CD8-positive, alpha-beta T cell (primary cell): ENCODE measurements at regions of chr6 and their contacts with region 1.

Region 1: GRCh38 chr6:80338201-80338836 is 231.8 kb downstream of the BCKDHB start:
- DNase-seq: peak; percentile 44 to 76 (median 67)
- ATAC-seq: peak; percentile 71
- H3K4me3 ChIP-seq: no peak overlapping the region
- H3K4me3 Mint-ChIP-seq: peak overlapping the region; percentile 16
- H3K27ac ChIP-seq: no peak overlapping the region
- H3K27ac Mint-ChIP-seq: no peak overlapping the region
- H3K4me1 ChIP-seq: no peaks in the 10 kb centered on the region
- H3K4me1 Mint-ChIP-seq: peaks cover 6% of the 10 kb centered on the region
- H3K27me3 ChIP-seq: no peaks in the 10 kb centered on the region
- H3K27me3 Mint-ChIP-seq: no peaks in the 10 kb centered on the region
- CTCF ChIP-seq: peak; percentile 84

Region 2: GRCh38 chr6:80380566-80380965 is 42.2 kb after region 1 on chr6:
- CTCF ChIA-PET with region 1: no interaction called
- POLR2A ChIA-PET with region 1: no interaction called
- intact Hi-C with region 1: loop called in 1 of 2 experiments (anchors 1 kb)
- DNase-seq: no peak
- ATAC-seq: no peak
- H3K4me3 ChIP-seq: no peak overlapping the region
- H3K4me3 Mint-ChIP-seq: no peak overlapping the region
- H3K27ac ChIP-seq: no peak overlapping the region
- H3K27ac Mint-ChIP-seq: no peak overlapping the region
- H3K4me1 ChIP-seq: no peaks in the 10 kb centered on the region
- H3K4me1 Mint-ChIP-seq: no peaks in the 10 kb centered on the region
- H3K27me3 ChIP-seq: no peaks in the 10 kb centered on the region
- H3K27me3 Mint-ChIP-seq: no peaks in the 10 kb centered on the region
- CTCF ChIP-seq: no peak